ENCODE measurements at regions of chr7 and their contacts with region 1.

Region 1: GRCh38 chr7:141737834-141738591 is at the start of gene SSBP1:
- DNase-seq: peak; percentile 96
- H3K4me3 ChIP-seq: peak within 1 kb of the TSS; percentile 76 to 78 (median 77)
- H3K27ac ChIP-seq: peak within 1 kb of the TSS; percentile 81 to 83 (median 82)
- H3K4me1 ChIP-seq: peaks cover 15 to 37% (median 25%) of the 10 kb centered on the region in 4 donors
- H3K27me3 ChIP-seq: no peaks in the 10 kb centered on the region
- CTCF ChIP-seq: peak; percentile 69 to 79 (median 76)
- EP300 ChIP-seq: no peak
- POLR2A ChIP-seq: no peak
- total RNA-seq, gene SSBP1: 105 to 122 (median 114) TPM

Region 2: DNA sequence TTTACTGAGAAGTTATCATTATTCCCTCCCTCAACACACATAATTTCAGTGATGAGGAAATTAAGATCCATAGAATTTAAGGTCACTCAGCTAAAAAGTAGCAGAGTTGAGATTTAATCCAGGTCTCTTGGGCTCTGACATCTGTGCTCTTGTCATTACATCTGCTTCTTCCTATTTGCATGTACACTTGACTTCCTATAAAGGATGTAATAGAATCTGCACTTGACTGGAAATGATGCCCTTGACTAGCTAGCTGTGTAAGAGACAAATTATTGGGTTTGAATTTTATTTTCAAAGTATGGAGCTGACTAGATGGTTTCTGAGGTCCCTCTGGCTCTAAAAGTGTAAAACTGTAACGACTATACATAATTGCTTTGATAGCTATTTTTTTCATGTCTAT is 127.3 kb before region 1 on chr7:
- intact Hi-C with region 1: no loop called
- DNase-seq: no peak
- H3K4me3 ChIP-seq: no peak overlapping the region
- H3K27ac ChIP-seq: no peak overlapping the region
- H3K4me1 ChIP-seq: no peaks in the 10 kb centered on the region
- H3K27me3 ChIP-seq: no peaks in the 10 kb centered on the region
- CTCF ChIP-seq: no peak
- EP300 ChIP-seq: no peak
- POLR2A ChIP-seq: no peak

Region 3: DNA sequence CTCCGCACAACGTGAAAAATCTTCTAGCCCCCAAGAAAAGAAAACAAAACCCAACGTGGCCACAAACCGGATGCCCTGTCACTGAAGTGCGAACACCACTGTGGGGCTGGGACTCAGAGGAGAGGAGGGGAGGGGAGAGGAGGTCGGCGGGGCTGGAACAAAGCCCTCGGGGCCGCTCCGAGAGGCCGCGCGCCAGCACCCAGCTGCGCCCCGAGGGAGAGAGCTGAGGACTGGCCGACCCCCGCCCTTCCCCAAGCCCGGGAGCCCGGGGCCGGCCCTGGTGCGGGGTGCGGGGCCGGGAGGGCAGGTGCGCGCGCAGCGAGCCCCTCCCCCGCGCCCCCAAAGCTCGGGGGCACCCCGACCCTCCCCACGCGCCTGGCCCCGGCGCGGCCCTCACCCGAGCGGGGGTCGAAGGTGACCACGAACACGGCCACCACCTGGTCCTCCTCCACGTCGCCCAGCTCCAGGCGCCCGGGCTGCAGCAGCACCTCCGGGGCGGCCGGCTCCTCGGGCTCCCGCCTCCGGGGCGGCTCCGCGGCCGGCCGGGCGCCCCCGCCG is 36.4 kb before region 1 on chr7:
- intact Hi-C with region 1: loop called (anchors 5 kb)
- DNase-seq: no peak
- H3K4me3 ChIP-seq: peak overlapping the region; percentile 76 to 98 (median 90)
- H3K27ac ChIP-seq: peak overlapping the region; percentile 86 to 90 (median 89)
- H3K4me1 ChIP-seq: peaks cover 21 to 55% (median 45%) of the 10 kb centered on the region in 4 donors
- H3K27me3 ChIP-seq: no peaks in the 10 kb centered on the region
- CTCF ChIP-seq: no peak
- EP300 ChIP-seq: no peak
- POLR2A ChIP-seq: no peak

Measured in esophagus muscularis mucosa (tissue), 4 donors.